ENCODE measurements at regions of chr5 and their contacts with region 1.

Region 1: GRCh38 chr5:16456103-16456832 is 9.3 kb downstream of the ZNF622 start:
- DNase-seq: no peak
- H3K4me3 ChIP-seq: no peak overlapping the region
- H3K27ac ChIP-seq: peak overlapping the region in 1 of 4 donors; percentile 38
- H3K4me1 ChIP-seq: peaks cover 0 to 22% (median 7%) of the 10 kb centered on the region in 4 donors
- H3K27me3 ChIP-seq: no peaks in the 10 kb centered on the region
- CTCF ChIP-seq: peak in 3 of 4 experiments; percentile 26 to 60 (median 37)
- EP300 ChIP-seq: no peak
- POLR2A ChIP-seq: no peak

Region 2: DNA sequence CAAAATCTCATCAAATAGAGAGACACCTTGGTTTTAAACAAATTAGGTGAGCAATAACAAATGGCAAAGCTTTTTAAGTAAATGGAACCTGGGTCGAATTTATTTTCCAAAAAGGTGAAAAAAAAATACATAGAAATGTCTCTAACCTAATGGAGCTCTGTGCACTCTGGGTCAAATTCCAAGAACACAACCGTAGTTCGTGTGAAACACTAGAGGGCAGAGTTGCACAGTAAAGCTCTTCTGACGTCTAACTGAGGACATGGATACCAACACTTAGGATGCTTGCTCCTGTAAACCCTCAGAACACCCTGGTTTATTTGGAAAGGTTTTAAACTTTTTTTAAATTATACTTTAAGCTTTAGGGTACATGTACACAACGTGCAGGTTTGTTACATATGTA is 295.6 kb before region 1 on chr5:
- intact Hi-C with region 1: loop called (anchors 5 kb)
- DNase-seq: no peak
- H3K4me3 ChIP-seq: no peak overlapping the region
- H3K27ac ChIP-seq: no peak overlapping the region
- H3K4me1 ChIP-seq: no peaks in the 10 kb centered on the region
- H3K27me3 ChIP-seq: peaks cover 0 to 5% (median 0%) of the 10 kb centered on the region in 3 donors
- CTCF ChIP-seq: peak in 2 of 4 experiments; percentile 10 to 45
- EP300 ChIP-seq: no peak
- POLR2A ChIP-seq: no peak

Measured in sigmoid colon (tissue), 7 donors.